Right ventricle myocardium superior (tissue), 1 donor: ENCODE measurements at regions of chr13 and their contacts with region 1.

Region 1: DNA sequence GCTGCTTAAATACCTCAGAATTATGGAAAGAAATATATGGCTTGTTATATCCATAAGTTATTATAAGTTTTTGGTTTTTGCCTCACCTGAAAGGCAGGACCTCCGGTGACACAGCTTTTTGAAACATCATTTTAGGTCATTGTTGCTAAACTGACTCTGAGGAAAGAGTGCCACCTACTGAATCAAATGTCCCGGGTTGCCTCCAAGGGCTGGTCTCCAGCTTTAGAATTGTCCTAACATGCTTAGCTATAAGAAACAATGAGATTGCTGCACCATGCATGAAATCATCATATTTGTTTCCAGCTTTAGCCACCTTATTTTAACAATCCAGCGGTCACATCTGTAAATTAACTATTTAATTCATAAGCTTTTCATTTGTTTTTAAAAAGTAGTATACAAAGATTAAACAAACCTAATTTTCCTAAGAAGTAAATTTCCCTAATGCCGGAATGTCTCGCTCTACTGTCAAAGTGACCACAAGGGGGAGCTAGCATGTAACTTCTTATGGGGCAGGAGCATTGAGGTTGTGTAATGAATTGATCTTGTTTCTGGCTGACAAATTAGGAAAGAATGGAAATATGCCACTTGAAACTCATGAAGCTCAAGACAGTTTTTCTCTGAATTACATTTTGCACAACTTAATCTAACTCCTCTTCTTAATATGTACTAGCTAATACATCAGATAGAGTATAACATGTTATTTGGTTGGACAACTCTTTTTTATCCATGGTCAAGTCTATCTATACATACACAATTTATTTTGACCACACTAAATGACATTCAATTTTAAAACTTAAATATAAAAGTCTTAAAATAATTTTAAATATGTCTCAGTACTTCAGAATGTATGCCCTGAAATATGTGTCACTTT is 6.7 kb upstream of the PCDH17 start:
- DNase-seq: no peak
- ATAC-seq: peak; percentile 57

Region 2: DNA sequence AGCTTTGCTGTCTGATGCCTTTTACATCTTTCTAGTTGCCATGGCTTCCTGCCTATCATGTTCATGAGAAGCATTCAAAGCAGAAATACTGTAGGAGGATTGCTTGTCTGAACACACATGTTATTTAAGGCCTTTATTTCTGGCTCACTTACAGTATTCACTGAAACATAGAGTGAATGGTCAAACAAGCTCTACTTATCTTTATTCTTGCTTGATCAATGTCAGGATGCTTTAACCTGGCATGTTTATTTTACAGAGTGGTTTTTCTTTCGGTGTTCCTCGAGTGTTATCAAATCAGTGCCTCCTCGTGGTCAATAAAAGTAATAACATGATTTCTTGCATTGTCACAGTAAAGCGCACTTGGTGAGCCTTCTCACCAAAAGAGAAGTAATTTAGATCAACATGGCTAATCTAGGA is 66.7 kb before region 1 on chr13:
- intact Hi-C with region 1: no loop called
- DNase-seq: no peak
- ATAC-seq: no peak

Region 3: GRCh38 chr13:57857945-57858344 is 233.1 kb after region 1 on chr13:
- intact Hi-C with region 1: loop called (anchors 5 kb)
- DNase-seq: no peak
- ATAC-seq: no peak